CD4-positive, alpha-beta memory T cell (primary cell): ENCODE measurements at regions of chr13 and their contacts with region 1.

Region 1: DNA sequence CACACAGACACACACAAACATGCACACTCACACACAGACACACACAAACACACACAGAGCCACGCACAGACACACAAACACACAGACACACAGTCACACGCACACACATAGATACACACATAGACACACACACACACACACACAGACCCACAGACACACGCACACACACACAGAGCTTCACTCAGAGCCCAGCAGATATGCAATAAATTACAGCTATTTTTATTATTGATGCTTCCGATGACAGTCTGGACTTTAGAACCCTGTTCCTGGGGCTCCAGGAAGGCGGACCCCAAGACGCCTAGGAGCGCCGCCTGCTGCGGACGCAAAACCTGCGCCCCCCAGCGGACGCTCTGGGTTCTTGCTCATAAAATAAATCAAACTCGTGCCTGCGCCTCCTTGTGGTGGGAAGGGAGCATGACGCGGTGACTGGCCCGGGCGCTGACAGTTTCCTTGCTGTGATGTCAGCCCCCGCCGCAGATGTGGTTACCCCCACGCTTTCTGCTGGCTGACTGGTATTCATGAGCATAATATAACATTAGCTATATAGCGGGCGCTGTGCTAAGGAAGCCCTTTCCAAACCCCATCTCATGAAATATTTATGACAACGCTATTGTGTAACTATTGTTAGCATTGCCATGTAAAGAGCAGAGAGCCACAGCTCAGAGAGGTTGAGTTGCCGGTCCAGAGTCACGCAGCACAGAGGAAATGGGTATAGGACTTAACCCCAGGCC is 64.4 kb upstream of the TM9SF2 start:
- DNase-seq: peak; percentile 92 to 95 (median 94)
- H3K4me3 ChIP-seq: peak overlapping the region in 1 of 2 donors; percentile 15
- H3K4me3 Mint-ChIP-seq: peak overlapping the region; percentile 19 to 85 (median 52)
- H3K27ac ChIP-seq: no peak overlapping the region
- H3K27ac Mint-ChIP-seq: peak overlapping the region; percentile 48 to 100 (median 90)
- H3K4me1 ChIP-seq: peaks cover 57% of the 10 kb centered on the region
- H3K4me1 Mint-ChIP-seq: peaks cover 40 to 58% (median 51%) of the 10 kb centered on the region in 4 donors
- H3K27me3 ChIP-seq: no peaks in the 10 kb centered on the region
- H3K27me3 Mint-ChIP-seq: peaks cover 0 to 3% of the 10 kb centered on the region in 2 donors

Region 2: GRCh38 chr13:98910501-98910951 is 526.3 kb before region 1 on chr13:
- CTCF ChIA-PET with region 1: no interaction called
- POLR2A ChIA-PET with region 1: no interaction called
- intact Hi-C with region 1: no loop called
- DNase-seq: peak; percentile 30 to 72 (median 34)
- H3K4me3 ChIP-seq: no peak overlapping the region
- H3K4me3 Mint-ChIP-seq: peak overlapping the region in 7 of 8 donors; percentile 35 to 81 (median 48)
- H3K27ac ChIP-seq: peak overlapping the region; percentile 17
- H3K27ac Mint-ChIP-seq: peak overlapping the region; percentile 62 to 97 (median 92)
- H3K4me1 ChIP-seq: peaks cover 15% of the 10 kb centered on the region
- H3K4me1 Mint-ChIP-seq: peaks cover 17 to 44% (median 31%) of the 10 kb centered on the region in 4 donors
- H3K27me3 ChIP-seq: no peaks in the 10 kb centered on the region
- H3K27me3 Mint-ChIP-seq: no peaks in the 10 kb centered on the region

Region 3: DNA sequence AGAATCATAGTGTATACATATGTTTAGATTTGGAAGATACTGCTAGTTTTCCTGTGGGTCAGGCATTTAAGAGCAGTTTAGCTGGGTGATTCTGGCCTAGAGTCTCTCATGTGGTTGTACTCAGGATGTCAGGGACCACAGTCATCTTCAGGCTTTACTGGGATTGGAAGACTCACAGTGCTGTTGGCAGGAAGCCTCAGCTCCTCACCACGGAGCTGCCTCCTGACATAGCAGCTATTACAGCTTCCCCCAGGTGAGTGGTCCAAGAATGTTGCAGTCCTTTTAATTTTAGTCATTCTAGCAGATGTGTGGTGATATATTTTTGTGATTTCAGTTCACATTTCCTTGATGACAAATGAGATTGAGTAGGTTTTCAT is 161.8 kb before region 1 on chr13:
- CTCF ChIA-PET with region 1: interaction called, 564 read pairs
- POLR2A ChIA-PET with region 1: interaction called, 84 read pairs
- intact Hi-C with region 1: no loop called
- DNase-seq: peak; percentile 46 to 67 (median 54)
- H3K4me3 ChIP-seq: peak overlapping the region in 1 of 2 donors; percentile 3
- H3K4me3 Mint-ChIP-seq: peak overlapping the region in 7 of 8 donors; percentile 43 to 86 (median 74)
- H3K27ac ChIP-seq: peak overlapping the region; percentile 11
- H3K27ac Mint-ChIP-seq: peak overlapping the region; percentile 80 to 98 (median 94)
- H3K4me1 ChIP-seq: peaks cover 93% of the 10 kb centered on the region
- H3K4me1 Mint-ChIP-seq: peaks cover 79 to 99% (median 89%) of the 10 kb centered on the region in 4 donors
- H3K27me3 ChIP-seq: no peaks in the 10 kb centered on the region
- H3K27me3 Mint-ChIP-seq: no peaks in the 10 kb centered on the region

Region 4: GRCh38 chr13:99322297-99323103 is 114.4 kb before region 1 on chr13:
- CTCF ChIA-PET with region 1: interaction called, 10 read pairs
- POLR2A ChIA-PET with region 1: interaction called, 11 read pairs
- intact Hi-C with region 1: no loop called
- DNase-seq: peak; percentile 63 to 72 (median 68)
- H3K4me3 ChIP-seq: peak overlapping the region in 1 of 2 donors; percentile 5
- H3K4me3 Mint-ChIP-seq: peak overlapping the region; percentile 20 to 82 (median 68)
- H3K27ac ChIP-seq: peak overlapping the region; percentile 79
- H3K27ac Mint-ChIP-seq: peak overlapping the region; percentile 91 to 99 (median 94)
- H3K4me1 ChIP-seq: peaks cover 87% of the 10 kb centered on the region
- H3K4me1 Mint-ChIP-seq: peaks cover 54 to 84% (median 69%) of the 10 kb centered on the region in 4 donors
- H3K27me3 ChIP-seq: no peaks in the 10 kb centered on the region
- H3K27me3 Mint-ChIP-seq: no peaks in the 10 kb centered on the region

Region 5: DNA sequence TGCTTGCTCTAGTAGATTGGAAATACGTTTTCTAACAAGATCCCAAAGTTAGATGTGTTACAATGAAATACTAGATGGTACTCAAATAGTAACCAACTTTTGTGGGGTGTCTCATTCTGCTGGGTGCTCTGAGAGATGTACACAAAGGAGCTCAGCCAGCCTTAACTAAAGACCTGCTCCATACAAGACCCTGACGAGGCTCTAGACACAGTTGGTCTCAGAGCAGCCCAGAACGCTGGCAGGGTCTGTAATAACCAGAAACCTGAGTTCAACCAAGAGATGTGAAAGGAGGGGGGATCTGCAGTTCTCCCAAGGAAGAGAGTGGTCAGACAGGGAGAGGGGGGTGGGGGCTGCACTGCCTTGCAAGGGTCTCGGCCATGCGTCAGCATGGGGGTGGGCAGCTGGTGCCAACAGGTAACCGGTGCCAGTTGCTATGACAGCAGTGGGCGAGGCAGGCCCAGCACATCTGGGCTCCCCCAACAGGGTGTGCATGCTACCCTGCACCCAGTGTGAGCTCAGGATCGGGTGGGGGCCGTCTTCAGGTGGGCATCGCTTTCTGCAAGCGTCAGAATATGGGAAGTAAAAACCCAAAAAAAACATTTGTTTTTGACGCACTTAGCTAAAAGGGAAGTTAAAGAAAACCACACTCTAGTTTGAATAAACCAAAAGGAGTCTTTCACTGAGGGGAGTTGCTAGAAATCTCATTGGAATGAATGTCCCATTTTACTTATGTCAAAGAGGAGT is 61.7 kb before region 1 on chr13:
- CTCF ChIA-PET with region 1: interaction called, 17 read pairs
- POLR2A ChIA-PET with region 1: interaction called, 19 read pairs
- intact Hi-C with region 1: no loop called
- DNase-seq: peak; percentile 73 to 89 (median 82)
- H3K4me3 ChIP-seq: peak overlapping the region in 1 of 2 donors; percentile 15
- H3K4me3 Mint-ChIP-seq: peak overlapping the region; percentile 61 to 77 (median 68)
- H3K27ac ChIP-seq: peak overlapping the region; percentile 39
- H3K27ac Mint-ChIP-seq: peak overlapping the region; percentile 96 to 100 (median 98)
- H3K4me1 ChIP-seq: peaks cover 85% of the 10 kb centered on the region
- H3K4me1 Mint-ChIP-seq: peaks cover 58 to 95% (median 79%) of the 10 kb centered on the region in 4 donors
- H3K27me3 ChIP-seq: no peaks in the 10 kb centered on the region
- H3K27me3 Mint-ChIP-seq: no peaks in the 10 kb centered on the region

Region 6: DNA sequence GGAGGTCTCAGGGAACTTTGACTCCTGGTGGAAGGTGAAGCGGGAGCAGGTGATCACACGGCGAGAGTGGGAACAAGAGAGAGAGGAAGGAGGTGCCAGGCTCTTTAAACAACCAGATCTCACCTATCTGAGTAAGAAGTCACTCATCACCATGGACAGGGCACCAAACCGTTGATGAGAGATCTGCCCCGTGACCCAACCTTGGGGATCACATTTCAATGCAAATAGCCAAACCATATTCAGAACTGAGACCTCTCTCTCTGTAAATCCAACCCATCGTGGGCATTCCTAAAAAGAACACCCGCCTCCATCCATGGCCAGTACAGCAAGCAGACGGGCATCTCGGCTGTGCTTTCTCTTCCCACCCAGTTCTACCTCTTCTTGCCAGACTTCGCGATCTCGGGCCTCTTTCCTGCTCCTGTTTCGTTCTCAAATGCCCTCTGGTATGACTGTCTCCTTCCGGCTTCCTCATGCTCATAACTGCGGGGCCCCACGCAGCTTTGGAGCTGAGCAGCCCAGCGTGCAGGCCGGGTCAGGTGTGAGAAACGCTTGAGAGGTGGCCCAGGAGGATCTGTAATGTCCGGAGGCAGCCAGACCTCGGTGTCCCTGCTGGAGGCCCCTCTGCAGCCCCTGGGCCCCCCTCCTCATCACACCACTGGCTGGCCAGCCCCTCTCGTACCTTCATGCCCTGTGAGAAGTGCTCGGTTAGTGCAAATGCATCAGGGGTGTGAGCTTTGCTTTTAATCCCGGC is 32.7 kb before region 1 on chr13:
- CTCF ChIA-PET with region 1: interaction called, 13 read pairs
- POLR2A ChIA-PET with region 1: no interaction called
- intact Hi-C with region 1: no loop called
- DNase-seq: no peak
- H3K4me3 ChIP-seq: no peak overlapping the region
- H3K4me3 Mint-ChIP-seq: peak overlapping the region in 6 of 8 donors; percentile 4 to 69 (median 34)
- H3K27ac ChIP-seq: no peak overlapping the region
- H3K27ac Mint-ChIP-seq: peak overlapping the region in 4 of 7 donors; percentile 30 to 70 (median 50)
- H3K4me1 ChIP-seq: peaks cover 7% of the 10 kb centered on the region
- H3K4me1 Mint-ChIP-seq: peaks cover 10 to 18% (median 14%) of the 10 kb centered on the region in 4 donors
- H3K27me3 ChIP-seq: no peaks in the 10 kb centered on the region
- H3K27me3 Mint-ChIP-seq: no peaks in the 10 kb centered on the region